AG04449 (cell line): ENCODE measurements at regions of chr21 and their contacts with region 1.

Region 1: GRCh38 chr21:45460611-45461368 is 55.8 kb downstream of the COL18A1 start:
- DNase-seq: peak; percentile 52
- H3K4me3 ChIP-seq: no peak overlapping the region
- CTCF ChIP-seq: no peak

Region 2: DNA sequence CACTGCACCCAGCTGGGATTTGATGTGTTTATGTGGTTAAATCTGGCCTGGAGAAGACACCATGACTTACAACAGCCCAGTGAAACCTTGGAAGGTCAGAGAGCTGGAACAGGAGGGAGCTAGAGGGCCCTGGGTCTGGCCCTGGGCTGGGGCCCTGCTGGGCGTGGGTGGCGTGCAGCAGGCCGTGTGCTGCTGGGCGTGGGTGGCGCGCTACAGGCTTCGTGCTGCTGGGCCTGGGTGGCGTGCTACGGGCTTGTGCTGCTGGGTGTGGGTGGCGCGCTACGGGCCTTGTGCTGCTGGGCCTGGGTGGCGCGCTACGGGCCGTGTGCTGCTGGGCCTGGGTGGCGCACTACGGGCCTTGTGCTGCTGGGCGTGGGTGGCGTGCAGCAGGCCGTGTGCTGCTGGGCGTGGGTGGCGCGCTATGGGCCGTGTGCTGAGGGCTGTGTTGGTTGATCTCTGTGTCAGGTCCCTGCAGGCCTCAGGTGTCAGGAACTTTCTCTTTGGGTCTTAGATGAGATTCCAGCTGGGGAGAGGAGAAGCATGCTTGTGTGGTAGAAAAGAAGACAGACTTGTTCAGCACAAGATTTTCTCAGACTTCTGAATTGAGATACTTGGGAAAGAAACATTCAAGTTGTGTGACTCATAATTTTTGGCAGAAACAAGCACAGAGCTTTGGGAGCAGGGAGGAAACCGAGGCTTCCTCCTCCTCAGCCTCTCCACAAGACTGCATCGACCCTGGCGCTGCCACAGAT is 10.2 kb after region 1 on chr21:
- CTCF ChIA-PET with region 1: interaction called, 12 read pairs
- POLR2A ChIA-PET with region 1: no interaction called
- DNase-seq: peak; percentile 77
- H3K4me3 ChIP-seq: peak overlapping the region; percentile 33
- CTCF ChIP-seq: no peak

Region 3: GRCh38 chr21:45478115-45478801 is 17.5 kb after region 1 on chr21:
- CTCF ChIA-PET with region 1: interaction called, 25 read pairs
- POLR2A ChIA-PET with region 1: no interaction called
- DNase-seq: no peak
- H3K4me3 ChIP-seq: no peak overlapping the region; the same call in 1 of the 2 replicates
- CTCF ChIP-seq: peak; percentile 91